ENCODE measurements at regions of chr9 and their contacts with region 1.

Region 1: GRCh38 chr9:136312436-136312835 is 8.5 kb upstream of the CCDC187 start:
- DNase-seq: no peak
- H3K4me3 ChIP-seq: no peak overlapping the region
- H3K27ac ChIP-seq: no peak overlapping the region
- H3K4me1 ChIP-seq: 0 out of 7 replicates have a peak, but pooled peaks cover 0 to 3% (median 0%) of the 10 kb centered on the region in 4 experiments
- H3K27me3 ChIP-seq: no peaks in the 10 kb centered on the region; a peak in 1 of 7 replicates
- CTCF ChIP-seq: peak in 2 of 3 experiments; percentile 59 to 79; a peak in 3 of 4 replicates
- EP300 ChIP-seq: no peak
- POLR2A ChIP-seq: no peak
- RAD21 ChIP-seq: peak; percentile 77 to 83

Region 2: DNA sequence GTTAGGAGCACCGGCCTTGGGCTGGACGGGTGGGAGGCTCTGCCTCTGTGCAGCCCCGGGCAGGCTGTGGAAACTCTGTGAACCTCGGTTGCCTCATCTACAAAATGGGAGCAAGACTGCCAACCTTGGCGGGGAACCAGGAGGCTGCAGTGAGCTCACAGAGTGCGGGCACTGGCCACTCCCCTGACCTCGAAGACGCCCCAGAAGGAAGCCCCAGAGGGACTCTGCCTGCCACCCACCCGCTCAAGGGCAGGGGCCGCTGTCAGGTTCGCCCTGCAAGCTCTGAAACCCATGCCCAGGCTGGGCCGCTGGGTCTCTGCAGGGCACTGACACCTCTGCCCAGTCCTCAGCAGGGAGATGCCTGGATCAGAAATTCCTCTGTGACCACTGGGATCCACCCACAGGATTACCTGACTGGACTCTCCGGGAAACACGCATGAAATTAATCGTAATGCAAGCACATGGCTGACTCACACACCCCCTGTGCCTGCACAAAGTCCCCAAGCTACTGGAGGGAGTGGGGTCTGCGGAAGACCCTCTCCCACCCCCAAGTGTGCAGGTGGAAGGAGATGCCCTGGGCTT is 15.9 kb before region 1 on chr9:
- CTCF ChIA-PET with region 1: interaction called, 11 read pairs
- POLR2A ChIA-PET with region 1: no interaction called
- DNase-seq: no peak
- H3K4me3 ChIP-seq: no peak overlapping the region
- H3K27ac ChIP-seq: no peak overlapping the region
- H3K4me1 ChIP-seq: no peaks in the 10 kb centered on the region; a peak in 1 of 7 replicates
- H3K27me3 ChIP-seq: no peaks in the 10 kb centered on the region
- CTCF ChIP-seq: no peak
- EP300 ChIP-seq: no peak
- POLR2A ChIP-seq: no peak
- RAD21 ChIP-seq: no peak

Region 3: DNA sequence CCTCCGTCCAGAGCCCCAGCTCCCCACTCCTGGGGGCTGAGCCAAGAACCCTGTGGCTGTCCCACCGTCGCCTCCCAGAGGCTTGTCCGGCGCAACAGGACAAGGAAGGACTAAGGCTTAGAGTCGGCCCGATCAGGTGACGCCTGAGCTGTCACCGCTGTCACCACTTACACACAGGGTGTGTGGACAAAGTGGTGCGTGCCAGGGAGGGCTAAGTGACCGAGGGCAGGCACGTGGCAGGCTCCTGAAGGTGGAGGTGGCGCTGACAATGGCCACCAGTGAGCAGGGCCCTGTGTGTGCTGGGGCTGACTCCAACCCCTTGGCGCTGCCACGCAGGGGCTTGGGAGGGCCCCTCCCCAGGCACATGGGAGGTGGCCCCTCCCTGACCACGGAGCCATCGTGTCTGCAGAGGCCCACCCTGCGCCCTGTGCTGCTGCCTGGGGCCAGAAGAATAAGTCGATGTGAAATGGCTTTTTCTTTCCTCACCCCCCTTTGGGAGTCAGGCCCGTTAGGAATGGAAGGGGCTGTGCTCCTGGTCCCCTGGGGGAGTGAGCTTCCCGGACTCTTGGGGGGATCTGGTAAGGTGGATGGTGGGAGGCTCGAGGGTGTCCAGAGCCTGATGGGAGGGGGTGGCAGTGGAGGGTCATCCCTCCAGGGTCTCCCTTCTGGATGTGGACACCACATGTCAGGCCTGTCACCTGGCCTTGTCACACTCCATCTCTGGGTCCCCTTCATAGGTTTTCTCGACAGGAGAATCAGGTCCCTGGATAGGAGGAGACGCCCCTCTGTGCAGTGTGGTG is 12.3 kb after region 1 on chr9:
- CTCF ChIA-PET with region 1: interaction called, 46 read pairs
- POLR2A ChIA-PET with region 1: interaction called, 5 read pairs
- DNase-seq: no peak
- H3K4me3 ChIP-seq: no peak overlapping the region
- H3K27ac ChIP-seq: no peak overlapping the region
- H3K4me1 ChIP-seq: peaks cover 0 to 24% (median 20%) of the 10 kb centered on the region in 4 experiments; a peak in 6 of 7 replicates
- H3K27me3 ChIP-seq: no peaks in the 10 kb centered on the region
- CTCF ChIP-seq: peak in 2 of 3 experiments; percentile 24 to 42; a peak in 2 of 4 replicates
- EP300 ChIP-seq: no peak
- POLR2A ChIP-seq: no peak
- RAD21 ChIP-seq: peak; percentile 18 to 40; a peak in 2 of 4 replicates

Region 4: GRCh38 chr9:136339173-136339957 is 26.9 kb after region 1 on chr9:
- CTCF ChIA-PET with region 1: interaction called, 20 read pairs
- POLR2A ChIA-PET with region 1: no interaction called
- DNase-seq: peak in 1 of 2 experiments; percentile 89
- H3K4me3 ChIP-seq: no peak overlapping the region
- H3K27ac ChIP-seq: no peak overlapping the region
- H3K4me1 ChIP-seq: peaks cover 0 to 9% (median 8%) of the 10 kb centered on the region in 4 experiments; a peak in 6 of 7 replicates
- H3K27me3 ChIP-seq: no peaks in the 10 kb centered on the region
- CTCF ChIP-seq: peak in 2 of 3 experiments; percentile 93 to 96; a peak in 3 of 4 replicates
- EP300 ChIP-seq: no peak
- POLR2A ChIP-seq: no peak
- RAD21 ChIP-seq: peak; percentile 76 to 82

Region 5: GRCh38 chr9:136410500-136411287 is 98.3 kb after region 1 on chr9 and contains the starts of genes ENTR1 and PMPCA:
- CTCF ChIA-PET with region 1: no interaction called
- POLR2A ChIA-PET with region 1: no interaction called
- DNase-seq: peak in 1 of 2 experiments; percentile 94
- H3K4me3 ChIP-seq: peak within 1 kb of the TSS; percentile 87 to 93 (median 92)
- H3K27ac ChIP-seq: peak within 1 kb of the TSS; percentile 75
- H3K4me1 ChIP-seq: peaks cover 0 to 3% (median 3%) of the 10 kb centered on the region in 4 experiments; a peak in 4 of 7 replicates
- H3K27me3 ChIP-seq: no peaks in the 10 kb centered on the region
- CTCF ChIP-seq: no peak
- EP300 ChIP-seq: no peak
- POLR2A ChIP-seq: peak; percentile 82 to 91
- RAD21 ChIP-seq: no peak
- total RNA-seq, gene ENTR1: 102 and 110 TPM in 2 replicates
- total RNA-seq, gene PMPCA: 88.2 and 89.2 TPM in 2 replicates

Measured in H1 (cell line).